ENCODE measurements at regions of chr3 and their contacts with region 1.

Region 1: DNA sequence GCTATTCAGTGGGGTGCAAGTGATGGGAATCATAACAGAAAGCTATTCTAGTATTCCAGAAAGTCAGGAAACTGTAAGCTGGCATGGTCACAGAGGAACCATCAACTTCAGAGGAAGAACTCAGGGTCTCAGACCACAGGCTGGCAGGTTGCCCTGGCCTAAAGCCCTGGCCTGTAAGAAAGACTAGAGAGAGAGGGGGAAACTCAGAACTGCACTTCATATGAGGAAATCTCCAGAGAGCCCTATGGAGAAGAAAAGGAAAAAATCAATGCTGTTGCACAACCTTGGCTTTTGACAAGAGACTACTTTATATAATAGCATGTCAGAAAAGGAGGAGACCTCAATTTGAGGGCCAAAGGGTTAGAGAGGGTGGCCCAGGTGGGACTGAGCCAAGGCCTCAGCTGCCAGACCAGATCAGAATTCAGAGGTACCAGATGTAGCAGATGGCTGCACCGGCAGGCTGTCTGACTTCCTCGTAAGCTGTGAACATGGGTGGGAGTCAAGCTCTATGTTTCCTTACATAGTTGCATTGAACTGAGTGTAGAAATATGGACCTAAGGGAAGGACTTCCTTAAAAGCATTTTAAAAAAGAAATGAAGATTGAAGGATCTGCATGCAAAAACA is 333.8 kb downstream of the PDCD6IP start:
- DNase-seq: no peak
- H3K4me3 ChIP-seq: no peak overlapping the region
- CTCF ChIP-seq: no peak

Region 2: DNA sequence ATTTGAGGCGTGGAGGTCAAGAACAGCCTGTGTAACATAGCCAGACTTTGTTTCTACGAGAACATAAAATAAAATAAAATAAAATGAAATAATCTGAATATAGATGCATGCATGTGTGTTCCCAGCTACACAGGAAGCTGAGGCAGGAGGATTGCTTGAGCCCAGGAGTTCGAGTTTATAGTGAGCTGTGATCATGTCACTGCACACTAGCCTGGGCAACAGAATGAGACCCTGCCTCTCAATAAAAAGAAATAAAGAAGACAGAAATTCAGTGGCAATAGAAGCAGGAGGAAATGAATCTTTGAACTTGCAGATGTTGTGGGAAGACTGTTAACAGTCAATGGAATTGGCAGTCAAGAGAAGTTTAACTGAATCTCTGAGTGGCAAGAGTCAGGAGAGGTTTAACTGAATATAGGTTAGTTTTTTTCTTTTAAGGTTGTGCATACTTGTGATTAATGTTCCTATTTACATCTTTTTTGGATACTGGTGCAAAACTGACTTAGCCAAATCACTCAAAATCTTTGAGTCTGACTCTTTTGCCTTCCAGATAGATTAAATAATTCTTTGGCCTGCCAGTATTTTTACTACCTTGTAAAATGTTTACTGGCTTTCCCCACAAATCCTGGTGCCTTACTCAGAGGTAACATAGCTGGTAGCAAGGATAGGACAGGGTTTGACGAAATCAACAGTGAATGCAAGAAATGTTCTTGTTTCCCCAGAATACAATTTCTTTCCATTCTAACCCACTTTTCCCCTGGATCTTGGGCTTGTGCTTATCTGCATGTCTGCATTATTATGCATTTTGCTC is 27.6 kb after region 1 on chr3:
- in situ Hi-C with region 1: loop called (anchors 5 kb)
- DNase-seq: no peak
- H3K4me3 ChIP-seq: no peak overlapping the region
- CTCF ChIP-seq: no peak

Region 3: DNA sequence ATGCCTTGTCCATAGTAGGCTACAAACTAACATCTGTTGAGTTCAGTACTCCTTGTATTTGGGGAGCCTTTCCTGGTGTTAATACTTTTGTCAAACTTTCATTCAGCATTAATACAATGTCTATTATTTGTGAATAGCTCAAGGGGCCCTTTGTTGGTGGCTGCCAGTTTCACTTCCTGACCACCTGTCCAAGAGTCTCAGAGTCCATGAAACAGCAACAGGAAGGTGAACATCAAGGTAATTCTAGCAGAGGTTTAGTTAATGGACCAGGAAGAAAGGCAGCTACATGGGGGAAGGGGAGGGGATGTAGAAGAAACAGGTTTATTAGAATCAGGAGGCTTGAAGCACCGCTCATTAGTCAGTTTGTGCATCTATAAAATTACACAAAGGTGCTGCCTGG is 53.1 kb after region 1 on chr3:
- in situ Hi-C with region 1: no loop called
- DNase-seq: no peak
- H3K4me3 ChIP-seq: no peak overlapping the region
- CTCF ChIP-seq: no peak

Measured in astrocyte of the cerebellum (primary cell).